GM23248 (cell line): ENCODE measurements at regions of chr16 and their contacts with region 1.

Region 1: DNA sequence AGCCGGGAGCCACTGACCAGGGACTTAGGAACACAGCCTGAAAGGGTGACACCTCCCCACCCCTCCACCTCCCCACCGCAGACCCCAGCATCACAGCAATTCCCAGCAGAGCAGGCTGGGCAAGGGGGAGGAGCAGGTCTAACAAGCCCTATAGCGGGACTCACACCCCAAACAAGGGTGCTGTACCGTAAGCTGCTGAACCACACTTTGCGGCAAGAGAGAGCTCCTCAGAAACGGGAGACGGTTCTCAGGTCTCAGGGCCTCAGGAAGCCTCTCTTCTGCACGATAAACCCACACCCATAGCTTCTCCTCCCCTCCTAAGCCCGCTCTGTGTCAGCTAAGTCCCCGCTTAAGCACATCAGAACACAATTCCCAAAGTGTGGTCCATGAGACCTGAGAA is 11.7 kb upstream of the COTL1 start:
- DNase-seq: no peak
- H3K4me3 ChIP-seq: no peak overlapping the region
- H3K27ac ChIP-seq: no peak overlapping the region
- H3K4me1 ChIP-seq: no peaks in the 10 kb centered on the region
- H3K27me3 ChIP-seq: no peaks in the 10 kb centered on the region

Region 2: DNA sequence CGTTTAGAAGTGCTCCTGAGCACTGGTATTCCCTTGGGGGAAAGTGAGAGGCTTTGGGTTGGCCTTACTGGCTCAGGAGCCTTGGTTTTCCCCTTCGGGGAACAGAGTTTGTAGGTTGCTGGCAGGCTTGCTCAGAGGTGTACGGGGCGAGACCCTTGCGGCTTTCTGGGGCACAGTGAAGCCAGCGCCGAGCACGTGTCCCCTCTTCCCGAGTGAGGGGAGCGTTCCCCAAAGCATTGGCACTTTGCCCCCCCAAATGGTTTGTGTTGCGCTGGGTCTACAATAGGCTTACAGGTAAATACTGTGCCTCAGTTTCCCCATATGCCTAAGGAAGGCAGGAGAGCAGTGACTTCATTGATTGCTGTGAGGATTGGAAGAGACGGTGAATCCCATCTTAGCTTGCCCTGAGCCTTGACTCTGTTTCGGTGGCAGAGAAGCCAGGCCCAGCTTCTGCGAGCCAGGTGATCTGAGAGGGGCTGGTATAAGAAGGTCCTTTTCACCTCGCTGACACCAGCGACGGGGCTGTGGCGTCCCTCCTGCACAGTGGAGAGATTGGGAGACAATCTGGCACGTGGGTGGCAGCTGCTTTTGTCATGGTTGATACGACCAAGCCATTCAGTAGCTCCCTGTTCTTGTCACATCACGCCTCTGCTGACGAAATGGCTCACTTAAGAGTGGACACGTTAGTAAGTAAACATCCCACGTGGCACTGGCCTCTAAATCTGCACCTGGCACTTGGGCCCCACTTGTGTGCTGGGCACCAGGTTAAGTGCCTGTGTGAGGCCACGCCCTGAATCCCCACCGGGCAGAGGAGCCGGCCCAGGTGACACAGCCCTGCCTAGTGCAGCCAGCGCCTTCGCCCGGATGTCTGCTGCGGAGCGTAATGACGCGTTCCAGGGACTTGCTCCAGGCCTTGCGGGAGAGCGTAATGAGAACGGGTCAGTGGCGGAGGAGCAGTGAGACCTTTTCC is 180.1 kb before region 1 on chr16:
- in situ Hi-C with region 1: no loop called
- DNase-seq: no peak
- H3K4me3 ChIP-seq: no peak overlapping the region
- H3K27ac ChIP-seq: no peak overlapping the region
- H3K4me1 ChIP-seq: peaks cover 11% of the 10 kb centered on the region
- H3K27me3 ChIP-seq: no peaks in the 10 kb centered on the region

Region 3: DNA sequence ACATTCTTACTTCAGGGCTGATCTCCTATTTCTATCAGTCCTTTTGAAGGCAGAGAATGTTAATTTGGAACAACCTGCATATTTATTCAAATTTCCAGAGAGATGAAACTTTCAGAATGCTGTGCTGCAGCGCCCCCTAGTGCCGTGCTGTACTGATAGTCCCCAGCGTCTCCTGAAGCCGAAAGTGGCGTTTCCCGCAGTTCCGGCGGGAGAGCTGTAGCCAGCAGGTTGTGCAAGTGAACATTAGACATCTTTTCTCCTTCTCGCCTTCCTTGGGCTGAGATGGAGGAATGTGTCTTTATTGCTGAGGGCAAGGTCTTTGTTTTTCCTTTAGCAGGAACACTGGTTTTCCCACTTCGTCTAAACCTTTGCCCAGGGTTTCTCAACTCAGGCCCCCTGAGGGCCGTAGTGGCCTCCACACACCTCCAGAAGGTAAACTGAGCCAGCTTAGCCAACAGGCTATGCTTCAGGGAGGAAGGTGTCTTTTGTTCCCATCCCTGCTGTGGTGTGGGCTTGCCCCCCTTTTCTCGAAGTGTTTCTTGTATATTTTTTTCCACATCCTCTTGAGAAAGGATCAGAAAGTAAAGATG is 96.6 kb after region 1 on chr16:
- in situ Hi-C with region 1: loop called (anchors 10 kb)
- DNase-seq: peak; percentile 91
- H3K4me3 ChIP-seq: no peak overlapping the region
- H3K27ac ChIP-seq: no peak overlapping the region
- H3K4me1 ChIP-seq: peaks cover 48% of the 10 kb centered on the region
- H3K27me3 ChIP-seq: no peaks in the 10 kb centered on the region

Region 4: DNA sequence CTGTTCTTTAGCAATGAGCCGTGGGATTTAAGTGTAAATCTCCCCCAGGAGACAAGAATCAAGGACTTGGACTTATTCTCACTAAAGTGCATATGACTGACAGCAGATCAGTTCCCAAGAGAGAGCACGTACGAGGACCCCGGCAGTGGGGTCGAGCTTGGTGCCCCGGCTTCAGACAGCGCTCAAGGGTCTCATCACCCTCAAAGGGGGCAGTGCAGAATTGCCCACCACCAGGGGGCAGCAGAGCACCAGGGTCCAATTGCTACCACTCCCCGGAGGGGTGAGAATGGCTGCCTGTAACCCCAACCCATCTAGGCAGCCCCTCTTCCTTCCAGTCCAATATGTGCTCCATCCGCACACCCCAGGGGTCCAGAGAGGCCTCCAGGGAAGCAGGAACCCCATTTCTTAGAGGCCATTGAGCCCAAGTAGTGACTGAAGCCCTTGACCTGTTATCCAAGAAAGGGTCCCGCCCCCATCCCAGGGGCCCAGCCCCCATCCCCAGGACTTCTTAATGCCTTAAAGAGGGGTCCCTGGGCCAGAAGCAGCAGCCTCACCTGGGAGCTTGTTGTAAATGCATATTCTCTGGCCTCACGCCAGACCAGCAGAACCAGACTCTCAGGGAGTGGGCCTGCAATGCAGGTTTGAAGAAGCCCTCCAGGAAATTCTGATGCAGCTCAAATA is 295.7 kb after region 1 on chr16:
- in situ Hi-C with region 1: no loop called
- DNase-seq: peak; percentile 41
- H3K4me3 ChIP-seq: no peak overlapping the region
- H3K27ac ChIP-seq: no peak overlapping the region
- H3K4me1 ChIP-seq: peaks cover 18% of the 10 kb centered on the region
- H3K27me3 ChIP-seq: no peaks in the 10 kb centered on the region